GM12878 (cell line): ENCODE measurements at regions of chr2 and their contacts with region 1.

Region 1: GRCh38 chr2:54558188-54559005 is 102.3 kb downstream of the SPTBN1 start:
- DNase-seq: no peak
- ATAC-seq: peak; percentile 63
- H3K4me3 ChIP-seq: peak overlapping the region; percentile 99
- H3K27ac ChIP-seq: peak overlapping the region; percentile 96
- H3K4me1 ChIP-seq: peaks cover 18% of the 10 kb centered on the region
- H3K27me3 ChIP-seq: no peaks in the 10 kb centered on the region
- CTCF ChIP-seq: no peak
- EP300 ChIP-seq: no peak
- POLR2A ChIP-seq: peak; percentile 78
- RAD21 ChIP-seq: no peak

Region 2: DNA sequence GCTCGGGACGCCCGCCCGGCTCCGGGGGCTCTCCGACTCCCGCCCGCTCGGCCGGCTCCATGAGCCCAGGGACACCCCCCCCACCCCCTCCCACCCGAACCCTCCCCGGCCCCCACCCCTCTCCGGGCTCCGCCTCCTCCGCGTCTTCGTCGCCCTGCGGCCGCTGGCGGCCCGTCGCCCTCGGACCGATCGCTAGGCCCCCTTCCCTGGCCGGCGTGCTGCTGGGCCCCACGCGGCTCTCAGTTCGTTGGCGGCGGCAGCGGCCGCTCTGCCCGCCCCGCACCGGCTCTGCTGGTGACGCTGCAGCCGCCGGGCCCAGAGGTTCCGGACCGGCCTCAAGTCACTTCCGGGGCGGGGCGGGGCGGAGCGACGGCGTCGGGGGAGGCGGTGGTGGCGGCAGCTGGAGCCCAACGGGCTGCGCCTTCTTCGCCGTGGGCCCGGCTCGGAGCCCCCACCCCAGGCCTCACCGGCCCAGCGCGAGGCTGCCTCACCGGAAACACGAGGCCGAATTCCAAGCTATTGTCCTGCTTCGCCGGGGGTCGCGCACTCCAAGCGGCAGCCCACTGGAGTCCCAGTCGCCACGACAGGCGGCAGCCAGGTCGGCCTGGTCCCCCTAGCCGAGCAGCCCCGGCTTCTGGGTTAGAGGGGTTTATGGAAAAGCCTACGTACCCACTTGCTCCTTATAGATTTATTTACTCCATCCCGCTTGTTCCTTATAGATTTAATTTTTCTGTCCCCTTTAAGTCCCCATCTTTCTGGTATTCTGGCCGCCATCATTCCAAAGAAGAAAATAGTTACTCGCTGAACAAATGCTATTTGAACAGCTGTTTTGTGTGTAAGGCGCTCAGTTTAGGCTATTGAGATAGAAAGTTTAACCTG is 587.4 kb before region 1 on chr2 and contains the start of gene PSME4:
- CTCF ChIA-PET with region 1: no interaction called
- POLR2A ChIA-PET with region 1: interaction called, 3 read pairs
- RAD21 ChIA-PET with region 1: no interaction called
- SMC1A ChIA-PET with region 1: interaction called, 3 read pairs
- in situ Hi-C with region 1: no loop called
- intact Hi-C with region 1: loop called (anchors 10 kb)
- DNase-seq: no peak
- ATAC-seq: peak; percentile 86
- H3K4me3 ChIP-seq: peak within 1 kb of the TSS; percentile 100
- H3K27ac ChIP-seq: peak within 1 kb of the TSS; percentile 86
- H3K4me1 ChIP-seq: peaks cover 4% of the 10 kb centered on the region; the same call in 1 of the 2 replicates
- H3K27me3 ChIP-seq: no peaks in the 10 kb centered on the region
- CTCF ChIP-seq: no peak
- EP300 ChIP-seq: no peak
- POLR2A ChIP-seq: peak; percentile 98
- RAD21 ChIP-seq: no peak
- polyA plus RNA-seq, gene PSME4: 20.2 to 29.7 TPM

Region 3: GRCh38 chr2:54545702-54546450 is 12.5 kb before region 1 on chr2:
- CTCF ChIA-PET with region 1: interaction called, 12 read pairs
- POLR2A ChIA-PET with region 1: interaction called, 51 read pairs
- RAD21 ChIA-PET with region 1: interaction called, 11 read pairs
- SMC1A ChIA-PET with region 1: interaction called, 32 read pairs
- in situ Hi-C with region 1: no loop called
- intact Hi-C with region 1: no loop called
- DNase-seq: no peak
- ATAC-seq: peak; percentile 82
- H3K4me3 ChIP-seq: no peak overlapping the region
- H3K27ac ChIP-seq: no peak overlapping the region
- H3K4me1 ChIP-seq: peaks cover 4% of the 10 kb centered on the region
- H3K27me3 ChIP-seq: no peaks in the 10 kb centered on the region
- CTCF ChIP-seq: no peak
- EP300 ChIP-seq: no peak
- POLR2A ChIP-seq: no peak
- RAD21 ChIP-seq: no peak

Region 4: GRCh38 chr2:54589340-54590215 is 31.2 kb after region 1 on chr2:
- CTCF ChIA-PET with region 1: interaction called, 5 read pairs
- POLR2A ChIA-PET with region 1: interaction called, 5 read pairs
- RAD21 ChIA-PET with region 1: interaction called, 6 read pairs
- SMC1A ChIA-PET with region 1: interaction called, 16 read pairs
- in situ Hi-C with region 1: no loop called
- intact Hi-C with region 1: no loop called
- DNase-seq: no peak
- ATAC-seq: peak; percentile 30
- H3K4me3 ChIP-seq: peak overlapping the region; percentile 14; the same call in 1 of the 2 replicates
- H3K27ac ChIP-seq: peak overlapping the region; percentile 73
- H3K4me1 ChIP-seq: peaks cover 71% of the 10 kb centered on the region
- H3K27me3 ChIP-seq: no peaks in the 10 kb centered on the region
- CTCF ChIP-seq: no peak
- EP300 ChIP-seq: no peak
- POLR2A ChIP-seq: no peak
- RAD21 ChIP-seq: no peak

Region 5: DNA sequence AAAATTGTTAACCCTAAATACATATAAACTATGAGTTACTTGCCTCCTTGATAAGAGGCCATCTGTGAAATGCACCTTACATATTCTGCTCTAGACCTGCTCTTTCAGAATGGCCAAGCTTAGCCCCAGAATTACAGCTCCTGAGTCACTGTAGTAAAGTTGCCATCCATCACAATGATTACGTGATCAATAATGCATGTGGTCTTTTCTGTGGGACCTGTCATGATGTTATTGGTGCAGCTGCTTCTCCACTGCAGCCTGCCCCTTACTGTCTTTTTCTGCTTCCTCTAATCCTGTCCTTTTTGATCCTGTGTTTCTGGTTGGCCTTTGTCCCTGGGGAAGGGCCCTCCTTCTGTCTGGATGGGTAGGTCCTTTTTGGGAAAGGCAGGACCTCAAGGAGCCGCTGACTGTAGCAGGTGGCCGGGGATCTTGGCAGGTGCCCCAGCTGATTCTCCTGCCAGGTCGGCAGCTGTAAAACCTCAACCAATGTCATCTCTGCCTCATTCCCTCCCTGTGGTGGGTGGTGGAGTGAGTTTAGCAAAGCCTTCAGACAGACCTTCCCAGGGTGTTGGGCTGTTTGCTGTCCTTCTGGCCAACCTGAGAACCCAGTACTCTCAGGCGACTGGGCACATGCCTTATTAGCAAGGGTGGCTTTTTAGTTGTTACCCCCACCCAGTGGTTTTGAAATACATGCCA is 38.9 kb after region 1 on chr2:
- CTCF ChIA-PET with region 1: interaction called, 6 read pairs
- POLR2A ChIA-PET with region 1: interaction called, 5 read pairs
- RAD21 ChIA-PET with region 1: interaction called, 6 read pairs
- SMC1A ChIA-PET with region 1: interaction called, 54 read pairs
- in situ Hi-C with region 1: no loop called
- intact Hi-C with region 1: no loop called
- DNase-seq: no peak
- ATAC-seq: peak; percentile 65
- H3K4me3 ChIP-seq: no peak overlapping the region
- H3K27ac ChIP-seq: peak overlapping the region; percentile 84
- H3K4me1 ChIP-seq: peaks cover 49% of the 10 kb centered on the region
- H3K27me3 ChIP-seq: no peaks in the 10 kb centered on the region
- CTCF ChIP-seq: no peak
- EP300 ChIP-seq: no peak
- POLR2A ChIP-seq: peak; percentile 21; the same call in 1 of the 2 replicates
- RAD21 ChIP-seq: peak; percentile 23; the same call in 1 of the 2 replicates